ENCODE measurements at regions of chr10 and their contacts with region 1.

Region 1: GRCh38 chr10:23293145-23293724 is 51.4 kb downstream of the C10orf67 start:
- DNase-seq: peak; percentile 36 to 80
- H3K4me3 ChIP-seq: no peak overlapping the region
- H3K27ac ChIP-seq: no peak overlapping the region
- H3K4me1 ChIP-seq: no peaks in the 10 kb centered on the region
- H3K27me3 ChIP-seq: peaks cover 0 to 1% (median 0%) of the 10 kb centered on the region in 4 experiments; a peak in 1 of 7 replicates
- CTCF ChIP-seq: peak; percentile 20 to 92 (median 82)
- EP300 ChIP-seq: no peak
- POLR2A ChIP-seq: no peak
- RAD21 ChIP-seq: peak; percentile 90 to 93

Region 2: GRCh38 chr10:23171223-23171876 is 121.9 kb before region 1 on chr10:
- CTCF ChIA-PET with region 1: interaction called, 29 read pairs
- POLR2A ChIA-PET with region 1: no interaction called
- DNase-seq: peak in 1 of 2 experiments; percentile 81
- H3K4me3 ChIP-seq: no peak overlapping the region
- H3K27ac ChIP-seq: no peak overlapping the region
- H3K4me1 ChIP-seq: peaks cover 2 to 10% (median 5%) of the 10 kb centered on the region in 4 experiments; a peak in 6 of 7 replicates
- H3K27me3 ChIP-seq: peaks cover 63 to 83% (median 80%) of the 10 kb centered on the region in 4 experiments
- CTCF ChIP-seq: no peak
- EP300 ChIP-seq: no peak
- POLR2A ChIP-seq: no peak
- RAD21 ChIP-seq: no peak

Region 3: DNA sequence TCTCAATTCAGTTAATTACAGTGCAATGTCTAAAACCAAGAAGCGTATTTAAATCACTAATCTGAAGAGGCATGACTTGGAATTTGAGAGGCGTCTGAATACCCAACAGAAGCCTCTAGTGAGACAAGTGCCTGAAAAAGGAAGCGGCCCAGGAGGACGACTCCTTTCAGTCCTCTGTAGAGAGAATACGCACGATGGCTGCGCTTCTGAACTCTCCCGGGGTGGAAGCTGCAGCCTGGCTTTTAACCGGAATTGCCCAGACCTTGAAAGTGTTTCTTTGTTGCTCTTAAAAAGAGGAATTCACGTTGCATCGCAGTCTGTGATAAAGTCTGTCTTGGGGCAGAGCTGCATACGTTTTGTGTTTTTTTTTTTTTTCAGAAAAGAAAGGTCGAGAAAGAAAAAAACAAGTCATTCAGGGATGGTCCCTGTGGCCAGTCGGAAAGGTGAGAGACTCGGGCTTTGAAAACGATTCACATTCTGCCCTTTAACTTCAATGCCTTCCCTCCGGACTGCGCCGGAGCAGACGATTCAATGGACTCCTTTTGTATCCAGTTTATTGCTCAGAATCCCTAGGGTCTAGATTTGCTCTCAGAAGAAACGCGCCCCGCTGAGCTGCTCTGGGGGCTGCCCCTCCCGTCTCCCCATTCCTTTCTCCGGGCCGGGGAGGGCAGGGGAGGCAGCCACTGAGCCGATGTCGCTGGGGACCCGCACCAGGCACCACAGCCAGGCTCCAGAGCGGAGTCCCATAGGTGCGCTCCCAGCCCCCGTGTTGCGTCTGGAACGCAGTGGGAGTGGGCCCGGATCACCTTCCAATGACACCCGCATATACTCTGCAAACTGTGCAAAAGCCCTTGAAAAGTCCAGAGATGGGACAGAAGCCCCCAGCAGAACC is 102.1 kb before region 1 on chr10:
- CTCF ChIA-PET with region 1: interaction called, 12 read pairs
- POLR2A ChIA-PET with region 1: no interaction called
- DNase-seq: peak in 1 of 2 experiments; percentile 62
- H3K4me3 ChIP-seq: peak overlapping the region in 2 of 4 experiments; percentile 10 to 54; a peak in 3 of 8 replicates
- H3K27ac ChIP-seq: no peak overlapping the region
- H3K4me1 ChIP-seq: peaks cover 7 to 15% (median 12%) of the 10 kb centered on the region in 4 experiments
- H3K27me3 ChIP-seq: peaks cover 87 to 99% (median 95%) of the 10 kb centered on the region in 4 experiments
- CTCF ChIP-seq: no peak
- EP300 ChIP-seq: no peak
- POLR2A ChIP-seq: no peak
- RAD21 ChIP-seq: no peak

Region 4: DNA sequence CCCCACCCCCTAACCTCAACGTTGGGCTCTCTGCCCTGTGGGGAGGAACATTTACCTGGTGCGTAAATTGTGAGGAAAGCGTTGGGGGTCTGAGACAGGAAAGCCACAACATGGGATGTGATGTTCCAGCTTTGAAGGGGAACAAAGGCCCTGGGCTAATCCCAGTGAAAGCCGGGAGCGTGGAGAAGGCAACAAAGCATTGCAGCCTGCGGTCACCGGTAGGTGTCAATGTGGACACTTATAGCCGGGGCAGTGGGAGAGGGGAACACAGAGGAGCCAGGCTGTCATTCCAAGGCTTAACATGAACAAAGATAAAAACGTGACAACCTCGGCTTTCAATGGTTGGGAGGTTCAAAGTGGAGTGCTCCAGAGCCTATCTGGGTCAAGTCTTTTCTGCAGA is 88.5 kb before region 1 on chr10:
- CTCF ChIA-PET with region 1: interaction called, 15 read pairs
- POLR2A ChIA-PET with region 1: no interaction called
- DNase-seq: no peak
- H3K4me3 ChIP-seq: peak overlapping the region in 1 of 4 experiments; percentile 32; a peak in 3 of 8 replicates
- H3K27ac ChIP-seq: no peak overlapping the region
- H3K4me1 ChIP-seq: peaks cover 0 to 18% (median 12%) of the 10 kb centered on the region in 4 experiments
- H3K27me3 ChIP-seq: peaks cover 51 to 63% (median 58%) of the 10 kb centered on the region in 4 experiments
- CTCF ChIP-seq: peak; percentile 45 to 57 (median 54); a peak in 3 of 4 replicates
- EP300 ChIP-seq: no peak
- POLR2A ChIP-seq: no peak
- RAD21 ChIP-seq: peak; percentile 44 to 58; a peak in 3 of 4 replicates

Region 5: DNA sequence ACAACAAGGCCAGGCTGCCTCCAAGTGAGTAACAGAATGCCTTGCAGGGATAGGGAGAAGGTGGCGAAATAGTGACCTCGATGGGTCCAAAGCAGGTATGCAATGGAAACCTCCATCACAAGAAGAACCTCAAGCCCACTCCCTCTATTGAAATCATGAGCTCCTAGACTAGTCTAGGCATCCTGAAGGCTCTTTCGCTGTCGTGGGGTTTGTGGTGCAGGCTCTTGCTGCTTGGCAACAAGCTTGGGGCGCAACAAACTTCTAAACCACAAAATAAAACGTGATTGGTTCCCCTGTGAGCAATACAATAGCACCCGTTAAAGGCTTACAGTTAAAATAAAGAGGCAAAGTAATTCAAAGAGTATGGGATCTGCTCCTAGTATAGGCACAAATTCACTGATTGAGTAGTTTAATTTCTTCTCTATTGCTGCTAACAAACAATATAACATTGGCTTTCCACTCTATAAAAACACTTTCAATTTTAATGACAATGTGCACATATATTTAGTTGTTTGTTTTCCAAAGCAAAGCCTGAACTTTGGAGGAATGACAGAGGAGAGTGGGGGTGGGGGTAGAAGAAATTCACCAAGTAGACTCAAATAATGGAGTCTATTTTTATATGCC is 12.7 kb before region 1 on chr10:
- CTCF ChIA-PET with region 1: interaction called, 45 read pairs
- POLR2A ChIA-PET with region 1: no interaction called
- DNase-seq: peak; percentile 51 to 64
- H3K4me3 ChIP-seq: peak overlapping the region in 2 of 4 experiments; percentile 7 to 48; a peak in 4 of 8 replicates
- H3K27ac ChIP-seq: peak overlapping the region; percentile 78
- H3K4me1 ChIP-seq: peaks cover 2 to 17% (median 7%) of the 10 kb centered on the region in 4 experiments; a peak in 6 of 7 replicates
- H3K27me3 ChIP-seq: no peaks in the 10 kb centered on the region
- CTCF ChIP-seq: no peak
- EP300 ChIP-seq: peak in 1 of 2 experiments; percentile 88; a peak in 1 of 3 replicates
- POLR2A ChIP-seq: peak; percentile 46 to 55; a peak in 2 of 3 replicates
- RAD21 ChIP-seq: peak in 1 of 2 experiments; percentile 34; a peak in 1 of 4 replicates

Region 6: DNA sequence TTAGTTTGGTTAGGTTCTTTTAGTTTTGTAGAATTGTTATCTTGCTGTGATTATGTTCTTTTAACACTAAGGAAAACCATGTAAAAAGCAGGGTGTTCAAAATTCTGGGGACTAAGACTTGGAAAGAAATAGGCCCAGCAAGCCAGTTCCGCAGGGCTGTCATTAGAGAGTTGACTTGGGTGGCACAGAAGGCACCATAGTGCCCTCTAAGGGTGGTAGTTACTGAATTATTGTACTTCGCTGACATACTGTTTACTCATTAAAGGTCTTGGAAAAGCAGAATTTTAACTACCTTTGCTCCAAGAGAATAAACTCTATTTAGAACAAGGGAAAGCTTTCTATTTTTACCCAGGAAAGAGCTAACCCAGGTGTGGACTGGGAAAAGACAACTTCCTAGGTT is 232.2 kb after region 1 on chr10:
- CTCF ChIA-PET with region 1: interaction called, 10 read pairs
- POLR2A ChIA-PET with region 1: no interaction called
- DNase-seq: no peak
- H3K4me3 ChIP-seq: no peak overlapping the region
- H3K27ac ChIP-seq: no peak overlapping the region
- H3K4me1 ChIP-seq: no peaks in the 10 kb centered on the region
- H3K27me3 ChIP-seq: no peaks in the 10 kb centered on the region
- CTCF ChIP-seq: peak in 2 of 3 experiments; percentile 34 to 41; a peak in 2 of 4 replicates
- EP300 ChIP-seq: no peak
- POLR2A ChIP-seq: no peak
- RAD21 ChIP-seq: peak; percentile 61 to 69